H1 (cell line): ENCODE measurements at regions of chr7 and their contacts with region 1.

Region 1: DNA sequence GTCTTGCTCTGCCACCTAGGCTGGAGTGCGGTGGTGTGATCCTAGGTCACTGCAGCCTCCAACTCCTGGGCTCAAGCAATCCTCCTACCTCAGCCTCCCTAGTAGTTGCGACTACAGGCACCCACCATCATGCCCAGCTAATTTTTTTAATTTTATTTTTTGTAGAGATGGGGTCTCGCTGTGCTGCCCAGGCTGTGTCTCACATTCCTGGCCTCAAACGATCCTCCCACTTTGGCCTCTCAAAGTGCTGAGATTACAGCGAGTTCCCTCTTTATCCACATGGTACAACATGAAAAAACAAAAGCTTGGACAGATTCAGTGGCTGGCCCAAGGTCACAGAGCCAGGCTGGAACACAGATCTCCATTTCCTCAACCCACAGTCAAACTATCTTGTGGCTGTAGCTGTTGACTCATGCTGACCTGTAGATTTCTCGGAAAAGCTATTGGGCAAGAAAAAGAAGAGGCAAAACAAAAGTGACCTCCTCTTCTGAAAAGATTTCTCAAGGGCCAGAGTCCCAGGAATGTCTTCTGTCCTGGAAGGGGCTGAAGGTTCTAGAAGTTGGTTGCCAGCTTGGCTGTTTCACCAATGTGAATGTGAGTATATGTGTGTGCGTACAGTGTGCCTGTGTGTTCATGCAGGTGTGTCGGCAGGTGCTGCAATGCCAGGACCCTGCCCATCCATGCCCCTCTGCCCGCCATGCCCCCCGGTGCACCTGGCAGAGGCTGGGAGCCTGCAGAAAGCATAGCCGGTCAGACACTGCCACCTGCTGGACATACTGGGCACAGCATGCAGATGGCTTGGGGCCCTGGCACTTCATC is 28.4 kb downstream of the TMEM130 start:
- DNase-seq: peak in 1 of 2 experiments; percentile 96
- H3K4me3 ChIP-seq: no peak overlapping the region
- H3K27ac ChIP-seq: no peak overlapping the region
- H3K4me1 ChIP-seq: peaks cover 0 to 5% (median 2%) of the 10 kb centered on the region in 4 experiments; a peak in 4 of 7 replicates
- H3K27me3 ChIP-seq: no peaks in the 10 kb centered on the region
- CTCF ChIP-seq: peak; percentile 94 to 98 (median 95)
- EP300 ChIP-seq: no peak
- POLR2A ChIP-seq: no peak
- RAD21 ChIP-seq: peak; percentile 97 to 99

Region 2: GRCh38 chr7:98617051-98617959 is 224.1 kb before region 1 on chr7 and contains the start of gene NPTX2:
- CTCF ChIA-PET with region 1: interaction called, 10 read pairs
- POLR2A ChIA-PET with region 1: no interaction called
- DNase-seq: peak in 1 of 2 experiments; percentile 92
- H3K4me3 ChIP-seq: peak within 1 kb of the TSS; percentile 53 to 72 (median 62)
- H3K27ac ChIP-seq: no peak within 1 kb of the TSS
- H3K4me1 ChIP-seq: peaks cover 0 to 8% (median 3%) of the 10 kb centered on the region in 4 experiments
- H3K27me3 ChIP-seq: peaks cover 12 to 61% (median 42%) of the 10 kb centered on the region in 4 experiments
- CTCF ChIP-seq: peak; percentile 49 to 60 (median 53)
- EP300 ChIP-seq: no peak; a peak in 1 of 3 replicates
- POLR2A ChIP-seq: peak in 1 of 2 experiments; percentile 92; a peak in 2 of 3 replicates
- RAD21 ChIP-seq: peak; percentile 7 to 38; a peak in 3 of 4 replicates
- total RNA-seq, gene NPTX2: 14.0 and 18.4 TPM in 2 replicates

Region 3: GRCh38 chr7:98745722-98746318 is 95.6 kb before region 1 on chr7:
- CTCF ChIA-PET with region 1: interaction called, 32 read pairs
- POLR2A ChIA-PET with region 1: no interaction called
- DNase-seq: peak in 1 of 2 experiments; percentile 97
- H3K4me3 ChIP-seq: no peak overlapping the region
- H3K27ac ChIP-seq: no peak overlapping the region
- H3K4me1 ChIP-seq: no peaks in the 10 kb centered on the region; a peak in 1 of 7 replicates
- H3K27me3 ChIP-seq: no peaks in the 10 kb centered on the region
- CTCF ChIP-seq: peak; percentile 86 to 89 (median 86)
- EP300 ChIP-seq: no peak
- POLR2A ChIP-seq: no peak
- RAD21 ChIP-seq: peak; percentile 79 to 83

Region 4: DNA sequence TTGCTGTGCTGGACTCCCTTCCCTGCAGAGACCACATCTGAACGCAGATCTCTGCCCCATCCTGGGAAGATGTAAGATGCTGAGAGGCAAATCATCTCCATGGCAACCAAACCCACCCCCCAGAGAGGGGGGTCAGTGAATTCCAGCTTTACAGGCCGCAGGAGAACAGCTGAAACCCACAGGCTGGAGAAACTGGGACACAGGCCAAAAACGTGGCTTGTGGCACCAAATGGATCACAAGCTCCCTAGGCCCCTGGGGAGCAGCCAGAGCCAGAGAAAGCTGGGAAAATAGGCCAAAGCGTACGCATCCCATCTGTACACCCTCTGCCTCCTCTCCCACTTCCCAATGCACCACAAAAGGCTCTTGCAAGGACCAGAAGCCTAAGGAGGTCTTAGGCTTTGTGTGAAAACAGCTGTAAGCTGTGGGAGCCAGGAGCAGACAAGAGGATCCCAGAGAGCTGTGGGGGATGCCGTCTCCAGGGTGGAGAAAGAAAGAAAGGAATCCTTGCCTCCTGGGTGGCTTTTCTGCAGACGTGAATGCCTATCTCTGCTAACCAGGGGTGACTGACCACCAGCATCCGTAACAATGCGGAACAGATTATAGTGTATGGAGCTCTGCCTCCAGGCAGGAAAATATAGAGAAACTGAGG is 31.1 kb before region 1 on chr7:
- CTCF ChIA-PET with region 1: interaction called, 10 read pairs
- POLR2A ChIA-PET with region 1: no interaction called
- DNase-seq: no peak
- H3K4me3 ChIP-seq: no peak overlapping the region
- H3K27ac ChIP-seq: no peak overlapping the region
- H3K4me1 ChIP-seq: peaks cover 0 to 2% (median 0%) of the 10 kb centered on the region in 4 experiments; a peak in 1 of 7 replicates
- H3K27me3 ChIP-seq: no peaks in the 10 kb centered on the region; a peak in 1 of 7 replicates
- CTCF ChIP-seq: no peak
- EP300 ChIP-seq: no peak
- POLR2A ChIP-seq: no peak
- RAD21 ChIP-seq: no peak

Region 5: GRCh38 chr7:98872328-98872924 is 31.0 kb after region 1 on chr7:
- CTCF ChIA-PET with region 1: interaction called, 16 read pairs
- POLR2A ChIA-PET with region 1: interaction called, 3 read pairs
- DNase-seq: no peak
- H3K4me3 ChIP-seq: no peak overlapping the region
- H3K27ac ChIP-seq: no peak overlapping the region
- H3K4me1 ChIP-seq: peaks cover 0 to 8% (median 4%) of the 10 kb centered on the region in 4 experiments; a peak in 5 of 7 replicates
- H3K27me3 ChIP-seq: peaks cover 8 to 31% (median 22%) of the 10 kb centered on the region in 4 experiments
- CTCF ChIP-seq: peak; percentile 5 to 27 (median 25); a peak in 2 of 4 replicates
- EP300 ChIP-seq: no peak
- POLR2A ChIP-seq: no peak
- RAD21 ChIP-seq: peak; percentile 6 to 42; a peak in 3 of 4 replicates

Region 6: GRCh38 chr7:98892609-98893008 is 51.2 kb after region 1 on chr7:
- CTCF ChIA-PET with region 1: no interaction called
- POLR2A ChIA-PET with region 1: no interaction called
- DNase-seq: no peak
- H3K4me3 ChIP-seq: no peak overlapping the region
- H3K27ac ChIP-seq: no peak overlapping the region
- H3K4me1 ChIP-seq: no peaks in the 10 kb centered on the region
- H3K27me3 ChIP-seq: no peaks in the 10 kb centered on the region
- CTCF ChIP-seq: no peak
- EP300 ChIP-seq: no peak
- POLR2A ChIP-seq: no peak
- RAD21 ChIP-seq: no peak

Region 7: DNA sequence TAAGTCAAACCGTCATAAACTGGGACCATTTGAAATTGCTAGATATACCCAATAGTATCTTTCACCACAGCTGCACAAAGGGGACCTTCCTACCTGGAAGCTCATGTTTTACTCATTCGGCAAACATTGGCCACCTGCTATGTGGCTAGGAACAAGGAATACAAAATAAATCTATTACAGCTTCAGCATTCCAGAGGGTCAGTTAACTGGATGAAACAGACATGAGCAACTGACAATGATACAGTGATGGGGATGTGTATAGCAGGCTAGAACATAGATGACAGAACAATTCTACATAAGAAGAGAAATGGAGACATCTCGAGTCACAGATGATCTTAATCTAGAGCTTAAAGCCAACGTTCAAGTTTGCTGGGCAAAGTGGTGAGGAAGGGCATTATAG is 305.6 kb after region 1 on chr7:
- CTCF ChIA-PET with region 1: no interaction called
- POLR2A ChIA-PET with region 1: no interaction called
- DNase-seq: no peak
- H3K4me3 ChIP-seq: no peak overlapping the region
- H3K27ac ChIP-seq: no peak overlapping the region
- H3K4me1 ChIP-seq: peaks cover 0 to under 1% (median under 1%) of the 10 kb centered on the region in 4 experiments; a peak in 3 of 7 replicates
- H3K27me3 ChIP-seq: no peaks in the 10 kb centered on the region
- CTCF ChIP-seq: no peak
- EP300 ChIP-seq: no peak
- POLR2A ChIP-seq: no peak
- RAD21 ChIP-seq: no peak